GM23248 (cell line): ENCODE measurements at regions of chr22 and their contacts with region 1.

Region 1: GRCh38 chr22:45984316-45984916 is 7.5 kb upstream of the WNT7B start:
- DNase-seq: no peak
- H3K4me3 ChIP-seq: no peak overlapping the region
- H3K27ac ChIP-seq: no peak overlapping the region
- H3K4me1 ChIP-seq: no peaks in the 10 kb centered on the region
- H3K27me3 ChIP-seq: no peaks in the 10 kb centered on the region

Region 2: DNA sequence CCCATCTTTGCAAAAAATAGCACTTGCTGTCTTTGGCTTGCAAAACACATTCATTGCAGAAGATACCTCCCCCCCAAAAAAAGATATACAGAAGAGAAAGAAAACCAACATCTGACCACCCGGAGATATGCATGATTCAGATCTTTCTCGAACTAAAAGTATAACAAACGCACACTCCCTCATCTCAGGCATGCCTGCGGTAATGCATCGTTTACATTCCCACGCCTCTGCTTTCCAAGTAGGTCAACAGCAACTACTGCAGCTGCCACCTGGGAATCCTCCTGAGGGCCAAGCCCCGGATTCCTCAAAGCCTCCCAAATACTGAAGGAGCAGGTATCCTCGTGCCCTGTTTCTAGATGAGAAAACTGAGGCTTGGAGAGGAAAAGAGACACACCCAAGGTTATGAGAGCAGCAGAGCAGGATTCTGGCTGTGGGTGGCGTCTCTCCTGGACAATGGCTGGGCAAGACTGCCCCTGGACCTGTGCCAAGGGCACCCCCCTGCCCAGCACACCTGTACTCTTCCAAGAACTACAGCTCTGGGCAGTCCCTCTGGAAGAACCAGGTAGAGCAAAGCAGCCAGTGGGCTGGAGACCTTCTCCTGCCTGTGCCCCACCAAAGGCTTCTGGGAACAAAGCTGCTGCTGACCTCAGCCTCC is 782.6 kb before region 1 on chr22:
- in situ Hi-C with region 1: no loop called
- DNase-seq: no peak
- H3K4me3 ChIP-seq: no peak overlapping the region
- H3K27ac ChIP-seq: no peak overlapping the region
- H3K4me1 ChIP-seq: no peaks in the 10 kb centered on the region
- H3K27me3 ChIP-seq: no peaks in the 10 kb centered on the region

Region 3: GRCh38 chr22:45577746-45578523 is 406.5 kb before region 1 on chr22:
- in situ Hi-C with region 1: loop called (anchors 10 kb)
- DNase-seq: peak; percentile 88
- H3K4me3 ChIP-seq: no peak overlapping the region
- H3K27ac ChIP-seq: no peak overlapping the region
- H3K4me1 ChIP-seq: no peaks in the 10 kb centered on the region
- H3K27me3 ChIP-seq: no peaks in the 10 kb centered on the region

Region 4: DNA sequence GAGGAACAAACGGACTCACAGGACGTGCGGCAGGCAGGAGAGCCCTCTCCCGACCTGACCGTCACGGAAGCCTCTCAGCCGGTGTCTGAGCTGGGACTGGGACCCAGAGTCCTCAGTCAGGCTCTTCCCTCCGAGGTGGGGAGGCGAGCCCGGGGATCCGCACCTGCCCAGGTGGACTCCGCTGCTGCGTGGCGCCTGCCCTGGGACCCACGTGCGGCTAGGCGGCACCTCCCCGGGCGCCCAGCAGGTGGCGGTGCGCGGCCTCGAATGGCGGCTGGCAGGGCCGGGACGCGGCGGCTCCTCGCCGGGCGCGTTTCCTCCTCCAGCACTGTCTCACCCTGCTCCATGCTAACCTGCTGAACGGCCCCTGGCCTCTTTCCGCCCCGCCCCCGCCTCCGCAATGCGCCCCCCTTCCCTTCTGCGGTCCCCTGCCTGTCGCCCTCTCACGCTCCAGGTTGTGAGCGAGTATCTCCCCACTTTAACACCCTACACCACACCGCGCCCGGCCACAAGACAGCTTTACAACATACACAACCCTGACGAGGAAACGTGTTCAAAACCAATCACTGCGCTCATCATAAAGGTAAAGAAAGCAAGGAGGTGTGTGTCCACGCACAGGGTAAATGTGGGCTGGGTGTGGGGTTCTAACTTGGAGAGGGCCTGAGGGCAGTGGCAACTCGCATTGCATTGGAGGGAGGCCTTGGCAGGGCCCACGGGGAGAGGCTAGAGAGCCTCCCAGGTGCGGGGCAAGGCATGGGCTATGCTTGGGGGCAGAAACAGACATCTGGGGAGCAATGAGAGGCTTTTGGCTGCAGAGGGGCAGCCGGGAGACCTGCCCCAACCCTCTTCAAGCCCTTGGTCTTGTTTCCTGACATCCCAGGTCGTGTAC is 338.6 kb before region 1 on chr22:
- in situ Hi-C with region 1: loop called (anchors 10 kb)
- DNase-seq: peak; percentile 78
- H3K4me3 ChIP-seq: no peak overlapping the region
- H3K27ac ChIP-seq: no peak overlapping the region
- H3K4me1 ChIP-seq: no peaks in the 10 kb centered on the region
- H3K27me3 ChIP-seq: no peaks in the 10 kb centered on the region

Region 5: DNA sequence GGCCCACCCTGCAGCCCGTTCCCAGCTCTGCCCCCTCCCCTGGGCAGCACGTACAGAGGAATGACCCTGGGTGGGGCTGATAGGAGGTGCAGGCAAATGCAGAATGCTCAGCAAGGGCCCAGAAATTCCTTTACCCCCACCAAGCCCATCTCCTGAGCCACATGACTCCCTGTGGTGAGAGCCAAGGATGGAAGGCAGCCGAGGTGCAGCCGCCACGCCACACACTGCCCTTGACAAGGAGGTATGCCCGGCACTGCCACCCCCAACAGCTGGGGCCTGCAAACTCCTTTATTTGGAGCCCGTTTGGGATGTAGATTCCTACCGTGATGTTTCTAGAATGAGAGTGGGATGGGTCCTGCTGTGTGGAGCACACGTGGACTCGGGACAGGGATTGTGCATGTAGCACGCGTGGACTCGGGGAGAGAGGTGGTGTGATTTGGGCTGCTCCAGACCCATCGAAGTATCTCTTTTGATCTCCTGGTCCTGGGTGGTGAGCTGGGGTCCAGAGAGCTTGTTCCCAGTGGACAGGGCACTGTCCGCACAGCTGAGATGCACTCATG is 325.2 kb after region 1 on chr22:
- in situ Hi-C with region 1: loop called (anchors 10 kb)
- DNase-seq: no peak
- H3K4me3 ChIP-seq: no peak overlapping the region
- H3K27ac ChIP-seq: no peak overlapping the region
- H3K4me1 ChIP-seq: no peaks in the 10 kb centered on the region
- H3K27me3 ChIP-seq: no peaks in the 10 kb centered on the region

Region 6: DNA sequence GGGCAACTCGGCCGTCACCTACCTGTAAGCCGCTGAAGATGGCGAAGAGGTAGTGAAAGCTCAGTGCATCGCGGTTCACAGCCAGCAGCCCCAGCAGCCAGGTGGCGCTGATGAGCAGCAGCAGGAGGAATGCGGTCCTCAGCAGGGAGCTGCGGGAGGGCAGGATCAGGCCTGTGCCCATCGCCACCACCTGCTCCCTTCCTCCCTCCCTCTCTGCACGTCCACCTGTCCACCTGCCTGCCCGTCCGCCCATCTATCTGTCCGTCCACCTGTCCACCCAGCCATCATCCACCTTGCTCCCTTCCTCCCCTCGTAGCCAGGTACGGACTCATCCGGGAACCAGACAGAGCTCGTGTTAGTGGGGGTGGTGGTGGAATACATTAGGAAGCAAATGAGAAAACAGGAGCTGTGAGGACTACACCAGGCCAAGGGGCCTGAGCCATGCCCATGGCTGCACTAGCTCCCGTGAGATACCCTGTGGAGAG is 383.3 kb after region 1 on chr22:
- in situ Hi-C with region 1: no loop called
- DNase-seq: peak; percentile 67
- H3K4me3 ChIP-seq: no peak overlapping the region
- H3K27ac ChIP-seq: no peak overlapping the region
- H3K4me1 ChIP-seq: no peaks in the 10 kb centered on the region
- H3K27me3 ChIP-seq: no peaks in the 10 kb centered on the region